ENCODE measurements at regions of chr4 and their contacts with region 1.

Region 1: GRCh38 chr4:12933760-12934221 is 550.3 kb downstream of the RAB28 start:
- DNase-seq: no peak
- H3K4me3 ChIP-seq: no peak overlapping the region
- H3K27ac ChIP-seq: no peak overlapping the region
- H3K4me1 ChIP-seq: no peaks in the 10 kb centered on the region
- H3K27me3 ChIP-seq: no peaks in the 10 kb centered on the region
- CTCF ChIP-seq: no peak
- EP300 ChIP-seq: no peak
- POLR2A ChIP-seq: no peak

Region 2: GRCh38 chr4:11632483-11632882 is 1301.3 kb before region 1 on chr4:
- intact Hi-C with region 1: loop called in 1 of 4 experiments (anchors 5 kb)
- DNase-seq: no peak
- H3K4me3 ChIP-seq: no peak overlapping the region
- H3K27ac ChIP-seq: no peak overlapping the region
- H3K4me1 ChIP-seq: no peaks in the 10 kb centered on the region
- H3K27me3 ChIP-seq: no peaks in the 10 kb centered on the region
- CTCF ChIP-seq: no peak
- EP300 ChIP-seq: no peak
- POLR2A ChIP-seq: no peak